IMR-90 (cell line): ENCODE measurements at regions of chr5 and their contacts with region 1.

Region 1: DNA sequence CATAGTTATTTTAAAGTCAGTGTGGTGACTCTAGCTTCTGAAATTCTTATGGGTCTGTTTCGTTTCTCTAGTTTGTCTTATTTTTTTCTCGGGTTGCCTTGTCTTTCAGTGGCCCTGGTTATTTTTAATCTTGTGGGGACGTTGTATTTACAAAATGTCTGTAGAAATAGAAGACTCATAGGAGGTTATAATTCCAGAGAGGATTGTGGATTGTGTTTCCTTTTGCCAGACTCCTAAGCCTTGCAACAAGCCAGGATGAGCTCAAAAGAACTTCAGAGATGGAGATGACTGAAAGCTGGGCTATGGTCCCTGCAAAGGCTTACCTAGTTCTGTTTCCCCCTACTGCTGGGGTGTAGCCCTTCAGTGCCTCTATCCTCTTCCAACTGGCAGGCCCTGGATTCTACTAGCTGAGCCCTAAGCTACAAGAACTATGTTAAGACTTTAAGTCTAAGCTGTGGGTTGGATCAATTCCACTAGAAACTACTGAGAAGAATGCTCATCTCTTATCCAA is 32.2 kb upstream of the LECT2 start:
- DNase-seq: peak; percentile 38
- ATAC-seq: peak; percentile 82
- H3K4me3 ChIP-seq: no peak overlapping the region
- H3K27ac ChIP-seq: peak overlapping the region; percentile 51; the same call in 1 of the 2 replicates
- H3K4me1 ChIP-seq: peaks cover 10% of the 10 kb centered on the region; the same call in 1 of the 2 replicates
- H3K27me3 ChIP-seq: no peaks in the 10 kb centered on the region
- CTCF ChIP-seq: no peak
- POLR2A ChIP-seq: no peak
- RAD21 ChIP-seq: no peak

Region 2: GRCh38 chr5:136028782-136029742 is 42.1 kb after region 1 on chr5 and contains the start of gene TGFBI:
- CTCF ChIA-PET with region 1: no interaction called
- POLR2A ChIA-PET with region 1: no interaction called
- dilution Hi-C with region 1: no loop called
- in situ Hi-C with region 1: no loop called
- intact Hi-C with region 1: loop called (anchors 5 kb)
- DNase-seq: peak; percentile 67
- ATAC-seq: peak; percentile 90
- H3K4me3 ChIP-seq: peak within 1 kb of the TSS; percentile 92
- H3K27ac ChIP-seq: peak within 1 kb of the TSS; percentile 89
- H3K4me1 ChIP-seq: peaks cover 28% of the 10 kb centered on the region
- H3K27me3 ChIP-seq: no peaks in the 10 kb centered on the region
- CTCF ChIP-seq: peak; percentile 17; the same call in 1 of the 2 replicates
- POLR2A ChIP-seq: peak; percentile 96
- RAD21 ChIP-seq: no peak; the same call in 1 of the 2 replicates
- total RNA-seq, gene TGFBI: 483 and 618 TPM in 2 replicates